ENCODE measurements at regions of chr5 and their contacts with region 1.

Region 1: GRCh38 chr5:175718401-175719108 is 60.7 kb downstream of the HRH2 start:
- DNase-seq: no peak
- ATAC-seq: peak; percentile 53
- H3K4me3 ChIP-seq: no peak overlapping the region
- H3K27ac ChIP-seq: no peak overlapping the region
- H3K4me1 ChIP-seq: no peaks in the 10 kb centered on the region
- H3K27me3 ChIP-seq: no peaks in the 10 kb centered on the region
- CTCF ChIP-seq: peak; percentile 39
- POLR2A ChIP-seq: no peak
- RAD21 ChIP-seq: peak; percentile 33

Region 2: DNA sequence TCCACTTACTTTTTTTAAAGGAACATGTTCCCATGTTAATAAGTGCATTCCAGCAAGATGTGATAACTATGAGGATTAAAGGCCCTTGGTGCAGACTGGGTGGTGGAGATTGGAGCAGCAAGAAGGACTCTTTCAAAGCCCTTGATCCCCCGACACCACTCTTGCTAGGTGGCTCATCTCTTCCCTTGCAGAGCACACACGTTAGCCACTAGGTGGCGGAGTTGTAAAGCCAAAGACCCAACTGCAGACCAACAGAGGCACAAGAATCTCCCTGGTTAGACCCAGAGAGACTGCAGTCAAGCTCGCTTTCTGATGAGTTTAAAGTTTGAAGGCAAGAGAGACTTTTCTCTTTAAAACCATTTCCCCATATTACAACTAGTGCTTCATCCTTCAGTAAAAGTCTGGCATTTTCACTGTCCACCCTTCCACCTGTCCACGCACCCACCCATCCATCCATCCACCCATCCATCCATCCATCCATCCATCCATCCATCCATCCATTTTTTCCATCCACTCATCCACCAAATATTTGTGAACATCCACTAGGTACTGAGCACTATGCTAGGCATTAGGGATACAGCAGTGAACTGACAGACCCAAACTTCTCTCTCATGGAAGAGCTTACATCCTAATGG is 767.3 kb before region 1 on chr5:
- CTCF ChIA-PET with region 1: no interaction called
- POLR2A ChIA-PET with region 1: no interaction called
- dilution Hi-C with region 1: no loop called
- in situ Hi-C with region 1: no loop called
- intact Hi-C with region 1: loop called (anchors 5 kb)
- DNase-seq: peak; percentile 80
- ATAC-seq: peak; percentile 99
- H3K4me3 ChIP-seq: no peak overlapping the region
- H3K27ac ChIP-seq: no peak overlapping the region
- H3K4me1 ChIP-seq: no peaks in the 10 kb centered on the region
- H3K27me3 ChIP-seq: no peaks in the 10 kb centered on the region; the same call in 1 of the 2 replicates
- CTCF ChIP-seq: peak; percentile 95
- POLR2A ChIP-seq: no peak
- RAD21 ChIP-seq: peak; percentile 97

Region 3: DNA sequence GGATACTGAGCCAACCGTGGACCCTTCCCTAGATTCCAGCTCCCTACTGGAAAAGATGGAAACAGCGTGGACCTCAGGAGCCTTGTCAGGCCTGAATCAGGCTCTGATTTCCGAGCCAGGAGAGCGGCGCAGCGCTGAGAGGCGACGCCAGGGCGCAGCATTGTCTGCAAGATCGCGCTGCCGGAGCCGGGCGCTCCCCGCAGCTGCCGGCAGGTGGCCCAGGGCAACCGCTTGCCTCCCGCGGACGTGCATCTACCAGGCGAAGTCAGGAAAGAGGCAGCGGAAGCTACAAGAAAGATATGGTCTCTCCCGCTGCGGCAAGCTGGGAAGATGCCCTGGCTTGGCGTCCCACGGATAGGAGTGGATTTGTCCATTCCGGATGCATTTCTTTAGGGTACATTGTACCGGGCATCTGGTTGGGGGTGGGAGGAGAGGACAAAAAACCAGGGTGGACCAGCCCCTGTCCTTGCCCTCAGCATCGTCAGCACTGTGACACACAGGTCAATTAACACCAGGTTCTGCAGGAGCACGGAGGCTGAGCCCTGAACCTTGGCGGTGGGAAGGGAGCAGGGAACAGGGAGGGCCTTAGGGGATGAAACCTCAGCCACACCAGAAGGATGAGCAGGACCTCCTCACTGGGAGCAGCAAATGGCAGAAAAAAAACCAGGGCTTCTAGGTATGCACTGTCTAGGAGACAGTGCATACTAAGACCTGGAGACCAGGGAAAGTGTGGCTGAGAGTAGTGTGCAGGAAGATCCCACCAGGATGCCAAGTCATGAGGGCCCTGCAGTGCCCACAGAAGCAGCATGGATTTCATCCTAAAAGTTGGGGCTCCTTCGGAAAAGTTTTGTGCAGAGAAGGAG is 184.3 kb before region 1 on chr5:
- CTCF ChIA-PET with region 1: interaction called, 8 read pairs
- POLR2A ChIA-PET with region 1: no interaction called
- dilution Hi-C with region 1: no loop called
- in situ Hi-C with region 1: no loop called
- intact Hi-C with region 1: loop called (anchors 5 kb)
- DNase-seq: peak; percentile 77
- ATAC-seq: peak; percentile 99
- H3K4me3 ChIP-seq: no peak overlapping the region
- H3K27ac ChIP-seq: no peak overlapping the region
- H3K4me1 ChIP-seq: no peaks in the 10 kb centered on the region
- H3K27me3 ChIP-seq: 0 out of 2 replicates have a peak, but pooled peaks cover 2% of the 10 kb centered on the region
- CTCF ChIP-seq: peak; percentile 99
- POLR2A ChIP-seq: no peak
- RAD21 ChIP-seq: peak; percentile 83

Region 4: DNA sequence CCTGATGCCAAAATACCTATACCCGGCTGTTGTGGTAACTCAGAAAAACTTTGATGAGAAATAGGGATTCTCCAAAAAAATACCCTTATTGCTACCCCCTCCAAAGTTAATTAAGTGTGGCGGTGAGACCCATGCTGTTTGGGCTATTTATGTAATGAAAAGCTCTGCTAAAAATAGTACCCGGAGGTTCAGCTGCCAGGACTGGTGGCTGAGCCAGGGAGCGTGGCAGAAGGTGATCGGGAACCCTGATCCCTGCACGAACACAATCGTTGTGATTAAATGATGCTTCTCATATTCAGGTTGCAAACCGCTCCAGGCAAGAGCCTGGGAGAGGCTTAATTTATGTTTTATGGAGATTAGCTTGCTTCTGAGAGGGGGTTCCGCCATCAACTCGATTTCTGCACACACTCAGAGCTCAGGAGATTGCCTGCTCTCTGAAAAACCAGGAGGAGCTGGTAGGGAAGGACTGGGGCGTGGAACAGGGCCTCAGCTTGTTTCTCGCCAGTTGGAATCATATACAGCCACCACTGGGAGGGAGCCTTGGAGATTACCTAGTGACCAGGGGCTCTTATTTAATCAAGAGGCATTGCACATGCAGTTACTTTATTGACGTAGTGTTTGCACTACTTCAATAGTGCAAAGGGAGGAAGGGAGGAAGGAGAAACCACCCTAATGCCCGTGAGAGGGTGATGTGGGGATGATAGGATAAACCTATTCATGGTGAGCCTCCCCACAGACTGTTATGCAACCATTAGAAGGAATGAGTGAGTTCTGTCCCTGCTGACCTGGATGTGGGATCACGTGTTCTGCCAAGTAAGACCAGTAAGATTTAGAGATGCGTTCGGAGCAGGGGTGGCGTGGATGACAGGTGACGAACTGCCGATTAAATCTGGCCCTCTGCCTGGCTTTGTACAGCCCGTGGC is 37.2 kb before region 1 on chr5:
- CTCF ChIA-PET with region 1: no interaction called
- POLR2A ChIA-PET with region 1: no interaction called
- dilution Hi-C with region 1: no loop called
- in situ Hi-C with region 1: no loop called
- intact Hi-C with region 1: no loop called
- DNase-seq: no peak
- ATAC-seq: no peak
- H3K4me3 ChIP-seq: no peak overlapping the region
- H3K27ac ChIP-seq: no peak overlapping the region
- H3K4me1 ChIP-seq: no peaks in the 10 kb centered on the region
- H3K27me3 ChIP-seq: no peaks in the 10 kb centered on the region
- CTCF ChIP-seq: no peak
- POLR2A ChIP-seq: no peak
- RAD21 ChIP-seq: no peak

Region 5: GRCh38 chr5:175750511-175750931 is 32.0 kb after region 1 on chr5:
- CTCF ChIA-PET with region 1: no interaction called
- POLR2A ChIA-PET with region 1: no interaction called
- dilution Hi-C with region 1: no loop called
- in situ Hi-C with region 1: no loop called
- intact Hi-C with region 1: no loop called
- DNase-seq: no peak
- ATAC-seq: no peak
- H3K4me3 ChIP-seq: no peak overlapping the region
- H3K27ac ChIP-seq: no peak overlapping the region
- H3K4me1 ChIP-seq: no peaks in the 10 kb centered on the region
- H3K27me3 ChIP-seq: no peaks in the 10 kb centered on the region
- CTCF ChIP-seq: no peak
- POLR2A ChIP-seq: no peak
- RAD21 ChIP-seq: no peak

Measured in IMR-90 (cell line).